Colonic mucosa (tissue), 4 donors: ENCODE measurements at regions of chr16 and their contacts with region 1.

Region 1: GRCh38 chr16:66869424-66869823 is 10.9 kb upstream of the PDP2 start:
- DNase-seq: no peak
- H3K4me3 ChIP-seq: no peak overlapping the region
- H3K27ac ChIP-seq: no peak overlapping the region
- H3K4me1 ChIP-seq: peaks cover 5% of the 10 kb centered on the region
- H3K27me3 ChIP-seq: no peaks in the 10 kb centered on the region
- CTCF ChIP-seq: no peak

Region 2: DNA sequence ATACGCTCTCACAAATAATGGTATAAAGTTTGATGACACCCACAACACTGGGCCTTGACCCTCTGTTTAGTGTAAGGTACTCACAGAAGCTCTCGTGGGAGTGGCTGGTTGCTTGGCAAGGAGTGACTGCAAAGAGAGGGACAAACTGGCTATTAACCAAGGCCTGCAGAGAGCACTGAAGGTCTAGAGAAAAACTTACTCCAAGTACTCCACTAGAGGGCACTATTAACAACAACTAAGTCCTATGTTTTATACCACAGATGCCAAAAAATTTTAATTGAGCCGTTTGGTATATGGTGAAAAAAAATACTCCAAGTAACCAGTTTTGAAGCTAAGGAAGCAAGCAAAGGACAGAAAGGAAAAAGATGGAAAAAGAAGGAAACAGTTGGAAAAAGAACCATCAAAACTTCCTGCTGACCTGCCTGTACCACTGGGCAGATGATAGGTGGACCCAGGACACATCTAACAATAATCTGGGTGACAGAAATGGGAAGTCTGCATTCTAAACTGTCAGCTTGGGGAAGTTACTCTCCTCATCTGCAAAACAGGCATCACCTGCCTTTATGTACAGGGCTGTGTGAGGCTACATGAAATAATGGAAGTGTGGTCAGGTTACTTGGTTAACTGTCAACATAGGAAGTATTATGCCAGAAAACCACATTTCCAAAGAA is 141.2 kb before region 1 on chr16:
- intact Hi-C with region 1: loop called (anchors 5 kb)
- DNase-seq: no peak
- H3K4me3 ChIP-seq: no peak overlapping the region
- H3K27ac ChIP-seq: no peak overlapping the region
- H3K4me1 ChIP-seq: no peaks in the 10 kb centered on the region
- H3K27me3 ChIP-seq: no peaks in the 10 kb centered on the region
- CTCF ChIP-seq: peak; percentile 58

Region 3: DNA sequence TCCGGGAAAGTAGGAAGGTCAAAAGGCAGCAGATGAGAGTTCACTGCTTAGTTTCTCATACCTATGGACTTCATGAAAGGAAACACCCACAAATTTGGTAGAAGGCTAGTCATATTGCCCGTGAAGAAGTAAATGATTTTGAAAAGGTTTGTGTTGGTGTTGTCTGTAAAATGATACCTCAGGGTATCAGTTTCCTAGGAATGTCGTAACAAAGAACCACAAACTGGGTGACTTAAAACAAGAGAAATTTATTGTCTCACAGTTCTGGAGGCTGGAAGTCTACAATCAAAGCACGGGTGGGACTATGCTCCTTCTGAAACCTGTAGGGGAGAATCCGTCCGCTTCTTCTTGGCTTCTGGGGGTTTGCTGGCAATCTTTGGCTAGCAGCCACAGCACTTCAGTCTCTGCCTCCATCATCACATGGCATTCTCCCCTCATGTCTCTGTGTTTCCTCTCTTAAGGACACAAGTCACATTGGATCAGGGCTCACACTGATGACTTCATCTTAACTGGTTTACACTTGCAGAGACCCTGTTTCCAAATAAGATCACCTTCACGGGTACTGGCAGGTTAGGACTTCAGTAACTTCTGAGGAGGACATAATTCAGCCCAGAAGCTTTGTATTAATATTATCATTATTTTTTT is 36.6 kb before region 1 on chr16:
- intact Hi-C with region 1: loop called (anchors 2 kb)
- DNase-seq: no peak
- H3K4me3 ChIP-seq: no peak overlapping the region
- H3K27ac ChIP-seq: no peak overlapping the region
- H3K4me1 ChIP-seq: peaks cover 8% of the 10 kb centered on the region
- H3K27me3 ChIP-seq: no peaks in the 10 kb centered on the region
- CTCF ChIP-seq: no peak